HCT116 (cell line): ENCODE measurements at regions of chr1 and their contacts with region 1.

Region 1: GRCh38 chr1:202926720-202927491 is at the start of gene KLHL12:
- DNase-seq: peak; percentile 93
- ATAC-seq: peak; percentile 97
- H3K4me3 ChIP-seq: peak within 1 kb of the TSS; percentile 93 to 95
- H3K27ac ChIP-seq: peak within 1 kb of the TSS; percentile 75
- H3K4me1 ChIP-seq: peaks cover 0 to 13% of the 10 kb centered on the region in 2 experiments; a peak in 1 of 4 replicates
- H3K27me3 ChIP-seq: no peaks in the 10 kb centered on the region
- CTCF ChIP-seq: peak; percentile 63 to 79 (median 74); a peak in 5 of 6 replicates
- POLR2A ChIP-seq: peak; percentile 88
- RAD21 ChIP-seq: peak; percentile 59
- total RNA-seq, gene KLHL12: 33.8 TPM

Region 2: GRCh38 chr1:202553560-202554038 is 373.3 kb before region 1 on chr1:
- CTCF ChIA-PET with region 1: no interaction called
- POLR2A ChIA-PET with region 1: no interaction called
- RAD21 ChIA-PET with region 1: no interaction called
- intact Hi-C with region 1: no loop called
- DNase-seq: no peak
- ATAC-seq: no peak
- H3K4me3 ChIP-seq: no peak overlapping the region
- H3K27ac ChIP-seq: no peak overlapping the region
- H3K4me1 ChIP-seq: no peaks in the 10 kb centered on the region
- H3K27me3 ChIP-seq: no peaks in the 10 kb centered on the region
- CTCF ChIP-seq: no peak
- POLR2A ChIP-seq: no peak
- RAD21 ChIP-seq: no peak

Region 3: GRCh38 chr1:202888531-202889360 is 38.2 kb before region 1 on chr1 and contains the start of gene RABIF:
- CTCF ChIA-PET with region 1: no interaction called
- POLR2A ChIA-PET with region 1: no interaction called
- RAD21 ChIA-PET with region 1: no interaction called
- intact Hi-C with region 1: loop called (anchors 2 kb)
- DNase-seq: peak; percentile 88
- ATAC-seq: peak; percentile 96
- H3K4me3 ChIP-seq: peak within 1 kb of the TSS; percentile 67 to 84
- H3K27ac ChIP-seq: peak within 1 kb of the TSS; percentile 90
- H3K4me1 ChIP-seq: peaks cover 6 to 14% of the 10 kb centered on the region in 2 experiments; a peak in 3 of 4 replicates
- H3K27me3 ChIP-seq: no peaks in the 10 kb centered on the region
- CTCF ChIP-seq: peak in 1 of 3 experiments; percentile 13; a peak in 1 of 6 replicates
- POLR2A ChIP-seq: peak; percentile 89
- RAD21 ChIP-seq: no peak
- total RNA-seq, gene RABIF: 5.4 TPM

Region 4: DNA sequence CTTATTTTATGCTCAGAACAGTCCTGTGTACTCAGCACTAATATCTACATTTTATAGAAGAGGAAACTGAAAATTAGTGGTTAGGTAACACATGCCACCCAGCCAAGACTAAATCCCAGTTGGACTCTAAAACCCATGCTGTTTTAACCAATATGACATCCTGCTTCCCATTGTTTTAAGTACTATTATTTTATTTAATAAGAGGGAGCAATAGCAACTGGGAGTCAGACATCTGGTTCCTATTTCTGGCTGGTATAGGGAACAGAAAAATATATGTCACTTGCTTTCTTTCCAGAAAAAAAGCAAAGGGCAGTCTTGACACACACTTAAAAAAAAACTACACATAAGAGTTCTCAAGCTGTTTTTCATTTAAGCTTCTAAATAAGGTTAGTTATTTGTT is 11.8 kb before region 1 on chr1:
- CTCF ChIA-PET with region 1: no interaction called
- POLR2A ChIA-PET with region 1: no interaction called
- RAD21 ChIA-PET with region 1: no interaction called
- intact Hi-C with region 1: no loop called
- DNase-seq: no peak
- ATAC-seq: no peak
- H3K4me3 ChIP-seq: no peak overlapping the region
- H3K27ac ChIP-seq: no peak overlapping the region
- H3K4me1 ChIP-seq: no peaks in the 10 kb centered on the region
- H3K27me3 ChIP-seq: no peaks in the 10 kb centered on the region
- CTCF ChIP-seq: no peak
- POLR2A ChIP-seq: no peak
- RAD21 ChIP-seq: no peak

Region 5: DNA sequence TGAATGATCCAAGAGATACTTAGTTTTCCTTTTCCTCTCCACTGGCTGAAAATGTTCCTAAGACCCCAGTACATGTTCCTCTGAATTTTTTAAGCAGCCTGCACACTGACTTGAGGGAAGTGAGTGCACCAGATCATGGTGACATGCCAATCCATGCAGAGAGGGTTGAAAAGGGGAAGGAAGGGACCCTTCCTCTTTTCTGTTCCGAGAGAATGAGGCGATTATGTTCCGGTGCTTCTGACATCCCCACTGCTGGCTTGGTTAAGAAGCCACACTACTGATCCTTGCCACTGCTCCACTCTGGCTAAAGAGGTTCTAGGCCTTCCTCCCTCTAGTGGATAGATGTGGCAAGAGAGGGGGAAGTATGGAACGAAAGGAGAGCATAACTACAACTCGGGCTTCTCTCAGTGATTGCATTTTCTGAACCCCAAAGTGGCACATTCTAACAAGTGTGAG is 42.0 kb after region 1 on chr1:
- CTCF ChIA-PET with region 1: no interaction called
- POLR2A ChIA-PET with region 1: no interaction called
- RAD21 ChIA-PET with region 1: no interaction called
- intact Hi-C with region 1: loop called (anchors 1 kb)
- DNase-seq: peak; percentile 68
- ATAC-seq: peak; percentile 82
- H3K4me3 ChIP-seq: no peak overlapping the region
- H3K27ac ChIP-seq: no peak overlapping the region
- H3K4me1 ChIP-seq: peaks cover 10 to 23% of the 10 kb centered on the region in 2 experiments
- H3K27me3 ChIP-seq: no peaks in the 10 kb centered on the region
- CTCF ChIP-seq: peak; percentile 49 to 93 (median 74); a peak in 5 of 6 replicates
- POLR2A ChIP-seq: no peak
- RAD21 ChIP-seq: peak; percentile 54

Region 6: GRCh38 chr1:202998836-202999750 is 72.2 kb after region 1 on chr1:
- CTCF ChIA-PET with region 1: no interaction called
- POLR2A ChIA-PET with region 1: no interaction called
- RAD21 ChIA-PET with region 1: no interaction called
- intact Hi-C with region 1: loop called (anchors 1 kb)
- DNase-seq: peak; percentile 39
- ATAC-seq: peak; percentile 73
- H3K4me3 ChIP-seq: no peak overlapping the region
- H3K27ac ChIP-seq: no peak overlapping the region
- H3K4me1 ChIP-seq: peaks cover 3 to 11% of the 10 kb centered on the region in 2 experiments; a peak in 2 of 4 replicates
- H3K27me3 ChIP-seq: peaks cover 11% of the 10 kb centered on the region; the same call in 1 of the 2 replicates
- CTCF ChIP-seq: peak; percentile 76 to 90 (median 84)
- POLR2A ChIP-seq: no peak
- RAD21 ChIP-seq: peak; percentile 93